Activated CD4-positive, alpha-beta T cell treated with anti-CD3 and anti-CD28 coated beads for 36 hours (primary cell): ENCODE measurements at regions of chr21 and their contacts with region 1.

Region 1: GRCh38 chr21:29436143-29436542 is 137.4 kb downstream of the BACH1 start:
- DNase-seq: peak; percentile 75
- ATAC-seq: peak; percentile 80
- H3K4me3 Mint-ChIP-seq: peak overlapping the region; percentile 73
- H3K27ac Mint-ChIP-seq: peak overlapping the region; percentile 91
- H3K4me1 Mint-ChIP-seq: peaks cover 46% of the 10 kb centered on the region
- H3K27me3 Mint-ChIP-seq: no peaks in the 10 kb centered on the region

Region 2: GRCh38 chr21:28554660-28555475 is 881.3 kb before region 1 on chr21:
- CTCF ChIA-PET with region 1: no interaction called
- POLR2A ChIA-PET with region 1: no interaction called
- intact Hi-C with region 1: no loop called
- DNase-seq: no peak
- ATAC-seq: no peak
- H3K4me3 Mint-ChIP-seq: no peak overlapping the region
- H3K27ac Mint-ChIP-seq: no peak overlapping the region
- H3K4me1 Mint-ChIP-seq: no peaks in the 10 kb centered on the region
- H3K27me3 Mint-ChIP-seq: no peaks in the 10 kb centered on the region

Region 3: DNA sequence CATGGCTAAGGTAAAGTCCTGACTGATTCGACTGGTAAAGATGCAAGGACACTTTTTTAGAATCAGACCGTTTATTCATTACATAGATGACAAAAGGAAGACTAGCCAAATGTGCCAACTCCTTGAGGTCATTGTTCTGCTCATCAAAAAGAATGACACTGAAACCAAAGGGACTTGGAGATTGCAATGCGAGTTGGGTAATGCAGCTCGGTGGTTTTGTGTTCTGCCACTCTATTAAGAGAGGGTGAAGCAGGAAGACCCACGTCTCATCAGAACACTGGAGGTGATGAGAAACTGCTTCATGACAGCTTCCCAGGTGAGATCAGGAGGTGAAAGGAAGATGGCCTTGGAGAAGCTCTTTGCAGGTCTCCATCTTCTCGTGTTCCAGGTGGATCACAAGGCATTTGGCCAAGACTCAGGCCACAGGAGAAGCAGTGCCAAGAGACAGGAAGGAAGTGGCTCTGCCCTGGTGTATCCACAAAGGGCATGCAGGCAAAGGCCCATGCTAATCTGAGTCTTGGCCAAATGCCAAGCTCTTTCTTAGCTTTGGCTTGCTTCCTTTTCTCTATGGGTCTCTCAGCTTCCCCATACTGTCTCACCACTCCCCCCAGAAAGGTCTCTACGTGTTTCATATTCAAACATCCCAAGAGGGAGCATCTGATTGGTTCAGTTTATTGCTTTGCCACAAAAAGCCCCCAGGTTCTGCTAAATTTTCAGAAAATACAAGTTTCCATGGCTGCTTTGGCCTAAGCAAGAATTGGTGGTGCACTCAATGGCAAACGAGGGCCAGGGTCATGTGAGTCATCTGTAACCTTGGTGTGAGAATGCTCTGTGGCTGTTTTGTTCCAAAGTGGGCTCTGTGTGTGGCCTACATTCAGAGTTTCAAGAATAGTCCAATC is 357.0 kb before region 1 on chr21:
- CTCF ChIA-PET with region 1: no interaction called
- POLR2A ChIA-PET with region 1: no interaction called
- intact Hi-C with region 1: loop called in 1 of 2 experiments (anchors 5 kb)
- DNase-seq: peak; percentile 61
- ATAC-seq: peak; percentile 62
- H3K4me3 Mint-ChIP-seq: peak overlapping the region; percentile 80
- H3K27ac Mint-ChIP-seq: peak overlapping the region; percentile 85
- H3K4me1 Mint-ChIP-seq: peaks cover 59% of the 10 kb centered on the region
- H3K27me3 Mint-ChIP-seq: no peaks in the 10 kb centered on the region

Region 4: GRCh38 chr21:29449306-29449950 is 13.3 kb after region 1 on chr21:
- CTCF ChIA-PET with region 1: interaction called, 6 read pairs
- POLR2A ChIA-PET with region 1: interaction called, 3 read pairs
- intact Hi-C with region 1: loop called (anchors 1 to 2 kb)
- DNase-seq: peak; percentile 23
- ATAC-seq: peak; percentile 89
- H3K4me3 Mint-ChIP-seq: peak overlapping the region; percentile 65
- H3K27ac Mint-ChIP-seq: peak overlapping the region; percentile 90
- H3K4me1 Mint-ChIP-seq: peaks cover 28% of the 10 kb centered on the region
- H3K27me3 Mint-ChIP-seq: no peaks in the 10 kb centered on the region